ENCODE measurements at regions of chr16 and their contacts with region 1.

Region 1: DNA sequence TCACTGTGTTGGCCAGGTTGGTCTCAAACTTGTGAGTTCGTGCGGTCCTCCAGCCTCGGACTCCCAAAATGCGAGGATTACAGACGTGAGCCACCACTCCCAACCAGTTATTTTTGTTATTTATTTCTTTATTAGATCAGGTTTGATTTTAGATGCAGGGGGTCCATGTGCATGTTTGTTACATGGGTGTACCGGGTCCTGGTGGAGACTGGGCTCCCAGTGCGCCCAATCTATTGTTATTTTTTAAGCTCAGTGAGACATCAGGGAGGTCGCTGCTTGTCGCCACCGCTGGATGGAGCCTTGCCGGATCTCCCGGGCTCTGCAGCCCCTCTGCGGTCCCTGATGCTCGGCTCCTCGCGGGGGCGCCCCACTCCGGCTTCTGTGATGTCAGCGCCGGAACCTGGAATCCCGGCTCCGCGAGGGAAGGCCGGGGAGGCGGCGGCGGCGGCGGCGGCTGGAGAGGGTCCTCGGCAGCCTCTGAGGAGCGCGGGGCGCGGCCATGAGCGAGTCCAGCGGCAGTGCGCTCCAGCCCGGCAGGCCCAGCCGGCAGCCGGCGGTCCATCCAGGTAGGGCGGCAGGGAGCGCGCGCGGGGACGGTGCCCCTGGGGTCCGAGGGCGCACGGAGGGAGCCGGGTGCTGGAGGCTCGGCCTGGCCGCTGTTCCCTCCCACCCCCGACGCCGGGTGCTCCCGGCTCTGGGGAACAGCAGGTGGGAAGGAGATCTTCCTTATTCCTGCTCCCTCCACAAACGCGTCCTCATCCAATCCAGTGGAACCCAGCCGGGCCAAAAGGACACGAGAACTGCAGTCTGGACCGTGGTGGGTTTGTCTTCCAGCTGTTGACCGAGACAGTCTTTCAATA is at the start of gene TMC7:
- DNase-seq: peak; percentile 62 to 87 (median 80)
- ATAC-seq: peak; percentile 90 to 99 (median 97)
- H3K4me3 ChIP-seq: peak within 1 kb of the TSS; percentile 37 to 57 (median 49)
- H3K27ac ChIP-seq: peak within 1 kb of the TSS in 3 of 4 donors; percentile 24 to 39 (median 36)
- H3K4me1 ChIP-seq: no peaks in the 10 kb centered on the region
- H3K27me3 ChIP-seq: no peaks in the 10 kb centered on the region
- CTCF ChIP-seq: peak in 3 of 4 donors; percentile 27 to 41 (median 28)
- total RNA-seq, gene TMC7: 0.20 to 1.1 (median 0.43) TPM

Region 2: DNA sequence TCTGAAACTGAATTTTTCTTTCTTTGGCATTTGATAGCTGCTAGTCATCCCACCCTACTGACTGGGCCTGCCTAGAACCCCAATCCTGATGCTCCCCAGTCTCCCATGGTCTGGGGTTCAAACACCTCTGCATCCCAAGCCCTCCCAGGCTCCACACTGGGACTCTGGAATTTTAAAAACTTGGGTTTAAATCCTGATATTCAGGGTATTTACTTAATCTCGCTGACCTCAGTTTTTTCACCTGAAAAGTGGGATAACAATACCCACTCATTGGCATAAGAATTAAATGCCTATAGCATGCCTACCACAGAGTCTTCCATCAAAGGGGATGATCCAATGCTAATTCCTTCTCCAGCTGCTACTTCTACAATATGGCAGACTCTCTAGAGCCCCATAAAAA is 911.6 kb before region 1 on chr16:
- intact Hi-C with region 1: no loop called
- DNase-seq: no peak
- ATAC-seq: no peak
- H3K4me3 ChIP-seq: no peak overlapping the region
- H3K27ac ChIP-seq: no peak overlapping the region
- H3K4me1 ChIP-seq: no peaks in the 10 kb centered on the region
- H3K27me3 ChIP-seq: no peaks in the 10 kb centered on the region
- CTCF ChIP-seq: no peak

Region 3: GRCh38 chr16:18834864-18835263 is 148.9 kb before region 1 on chr16:
- intact Hi-C with region 1: no loop called
- DNase-seq: no peak
- ATAC-seq: no peak
- H3K4me3 ChIP-seq: no peak overlapping the region
- H3K27ac ChIP-seq: no peak overlapping the region
- H3K4me1 ChIP-seq: no peaks in the 10 kb centered on the region
- H3K27me3 ChIP-seq: no peaks in the 10 kb centered on the region
- CTCF ChIP-seq: no peak

Region 4: DNA sequence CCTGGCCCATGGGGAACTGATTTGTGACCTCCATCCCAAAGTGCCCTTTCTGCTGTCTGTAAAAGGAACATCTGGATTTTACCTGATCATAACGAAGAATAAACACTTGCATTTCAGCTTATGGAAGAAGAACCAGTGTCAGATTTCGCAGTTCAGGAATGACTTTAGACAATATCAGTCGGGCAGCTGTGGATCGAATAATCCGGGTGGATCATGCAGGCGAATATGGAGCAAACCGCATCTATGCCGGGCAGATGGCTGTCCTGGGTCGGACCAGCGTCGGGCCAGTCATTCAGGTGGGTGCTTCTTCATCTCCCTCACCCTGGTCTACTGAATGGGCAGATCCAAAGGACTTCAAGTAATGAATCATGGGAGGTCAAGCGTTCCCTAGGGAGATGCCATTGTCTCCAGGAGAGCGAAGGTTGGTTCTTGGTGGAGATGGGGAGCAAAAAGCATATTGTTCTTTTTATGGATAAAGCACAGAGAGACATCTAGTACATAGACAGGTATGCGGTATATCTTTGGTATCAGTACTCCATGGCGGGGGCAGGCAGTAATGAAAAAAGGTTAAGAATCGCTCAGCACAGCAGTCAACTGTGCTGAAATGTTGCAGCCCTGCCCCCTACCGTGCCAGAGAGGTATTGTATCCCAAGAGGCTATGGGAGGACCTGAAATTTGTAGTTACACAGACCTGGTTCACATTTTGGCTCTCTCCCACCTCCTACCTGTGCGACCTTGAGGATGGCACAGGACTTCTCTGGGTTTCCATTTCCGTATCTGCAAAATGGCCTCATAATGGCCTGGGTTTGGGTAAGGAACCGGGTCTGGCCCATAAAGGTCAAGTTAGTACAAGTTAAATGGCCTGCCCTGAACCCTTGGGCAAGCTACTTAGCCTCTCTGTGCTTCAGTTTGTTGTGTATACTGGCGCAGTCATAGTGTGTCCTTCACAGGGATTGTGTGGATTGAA is 88.3 kb after region 1 on chr16:
- intact Hi-C with region 1: loop called in 1 of 3 experiments (anchors 5 kb)
- DNase-seq: peak in 4 of 6 donors; percentile 27 to 70 (median 62)
- ATAC-seq: peak in 1 of 4 donors; percentile 9
- H3K4me3 ChIP-seq: no peak overlapping the region
- H3K27ac ChIP-seq: no peak overlapping the region
- H3K4me1 ChIP-seq: peaks cover 8 to 10% (median 8%) of the 10 kb centered on the region in 3 donors
- H3K27me3 ChIP-seq: no peaks in the 10 kb centered on the region
- CTCF ChIP-seq: peak; percentile 36 to 61 (median 57)

Measured in pancreas (tissue), 10 donors.